CD4-positive, alpha-beta memory T cell (primary cell): ENCODE measurements at regions of chr1 and their contacts with region 1.

Region 1: GRCh38 chr1:51535006-51535592 is 16.0 kb upstream of the EPS15 start:
- DNase-seq: peak; percentile 39 to 50 (median 43)
- H3K4me3 ChIP-seq: no peak overlapping the region
- H3K4me3 Mint-ChIP-seq: peak overlapping the region in 2 of 8 donors; percentile 30 to 35
- H3K27ac ChIP-seq: no peak overlapping the region
- H3K27ac Mint-ChIP-seq: peak overlapping the region in 5 of 7 donors; percentile 47 to 87 (median 80)
- H3K4me1 ChIP-seq: peaks cover 11% of the 10 kb centered on the region
- H3K4me1 Mint-ChIP-seq: peaks cover 8 to 11% (median 10%) of the 10 kb centered on the region in 4 donors
- H3K27me3 ChIP-seq: no peaks in the 10 kb centered on the region
- H3K27me3 Mint-ChIP-seq: no peaks in the 10 kb centered on the region

Region 2: GRCh38 chr1:51296383-51297357 is 238.4 kb before region 1 on chr1:
- CTCF ChIA-PET with region 1: interaction called, 3 read pairs
- POLR2A ChIA-PET with region 1: no interaction called
- intact Hi-C with region 1: loop called (anchors 2 kb)
- DNase-seq: peak; percentile 45 to 60 (median 53)
- H3K4me3 ChIP-seq: peak overlapping the region; percentile 36 to 52
- H3K4me3 Mint-ChIP-seq: peak overlapping the region; percentile 58 to 84 (median 76)
- H3K27ac ChIP-seq: no peak overlapping the region
- H3K27ac Mint-ChIP-seq: peak overlapping the region in 2 of 7 donors; percentile 13 to 52
- H3K4me1 ChIP-seq: peaks cover 12% of the 10 kb centered on the region
- H3K4me1 Mint-ChIP-seq: peaks cover 4 to 30% (median 12%) of the 10 kb centered on the region in 4 donors
- H3K27me3 ChIP-seq: no peaks in the 10 kb centered on the region
- H3K27me3 Mint-ChIP-seq: no peaks in the 10 kb centered on the region